ENCODE measurements at regions of chr6 and their contacts with region 1.

Region 1: DNA sequence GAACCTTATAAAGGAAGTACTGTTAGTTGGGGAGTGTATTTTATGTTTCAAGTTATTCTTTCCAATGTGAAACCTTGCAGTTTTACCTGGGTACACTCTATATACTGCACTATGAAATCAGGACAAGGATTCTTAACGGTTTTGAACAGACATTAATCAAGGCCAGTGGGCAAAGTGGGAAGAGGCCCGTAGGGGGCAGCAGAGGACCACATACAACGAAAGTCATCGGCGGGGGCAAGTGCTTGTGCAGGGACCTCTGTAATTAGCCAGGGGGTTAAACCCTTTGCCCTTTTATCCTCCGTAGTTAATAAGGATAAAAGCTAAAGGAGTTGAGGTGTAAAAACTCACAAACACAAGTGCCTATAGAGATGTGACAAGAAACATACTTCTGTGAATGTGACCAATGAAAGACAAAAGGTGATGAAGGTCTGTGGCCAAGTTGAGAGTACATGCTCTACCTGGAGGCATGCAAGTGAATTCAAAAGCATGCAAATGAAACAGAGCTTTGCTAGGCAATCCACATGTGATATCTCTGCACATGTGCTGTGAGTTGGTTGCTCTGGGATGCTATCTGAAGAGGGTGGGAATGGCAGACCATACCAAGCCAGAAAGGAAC is 392.7 kb upstream of the MAN1A1 start:
- DNase-seq: no peak
- ATAC-seq: peak; percentile 98
- H3K4me3 ChIP-seq: no peak overlapping the region
- H3K27ac ChIP-seq: no peak overlapping the region
- H3K4me1 ChIP-seq: no peaks in the 10 kb centered on the region
- H3K27me3 ChIP-seq: no peaks in the 10 kb centered on the region; a peak in 1 of 4 replicates
- CTCF ChIP-seq: peak; percentile 82 to 85 (median 84)
- EP300 ChIP-seq: no peak
- POLR2A ChIP-seq: no peak
- RAD21 ChIP-seq: peak; percentile 93

Region 2: GRCh38 chr6:119333707-119334295 is 408.5 kb before region 1 on chr6:
- CTCF ChIA-PET with region 1: interaction called, 3 read pairs
- POLR2A ChIA-PET with region 1: no interaction called
- RAD21 ChIA-PET with region 1: interaction called, 10 read pairs
- SMC1A ChIA-PET with region 1: interaction called, 8 read pairs
- in situ Hi-C with region 1: no loop called
- intact Hi-C with region 1: no loop called
- DNase-seq: no peak
- ATAC-seq: peak; percentile 61
- H3K4me3 ChIP-seq: no peak overlapping the region
- H3K27ac ChIP-seq: no peak overlapping the region
- H3K4me1 ChIP-seq: no peaks in the 10 kb centered on the region
- H3K27me3 ChIP-seq: no peaks in the 10 kb centered on the region
- CTCF ChIP-seq: peak; percentile 45 to 69 (median 57); a peak in 5 of 6 replicates
- EP300 ChIP-seq: no peak
- POLR2A ChIP-seq: no peak
- RAD21 ChIP-seq: peak; percentile 88

Region 3: DNA sequence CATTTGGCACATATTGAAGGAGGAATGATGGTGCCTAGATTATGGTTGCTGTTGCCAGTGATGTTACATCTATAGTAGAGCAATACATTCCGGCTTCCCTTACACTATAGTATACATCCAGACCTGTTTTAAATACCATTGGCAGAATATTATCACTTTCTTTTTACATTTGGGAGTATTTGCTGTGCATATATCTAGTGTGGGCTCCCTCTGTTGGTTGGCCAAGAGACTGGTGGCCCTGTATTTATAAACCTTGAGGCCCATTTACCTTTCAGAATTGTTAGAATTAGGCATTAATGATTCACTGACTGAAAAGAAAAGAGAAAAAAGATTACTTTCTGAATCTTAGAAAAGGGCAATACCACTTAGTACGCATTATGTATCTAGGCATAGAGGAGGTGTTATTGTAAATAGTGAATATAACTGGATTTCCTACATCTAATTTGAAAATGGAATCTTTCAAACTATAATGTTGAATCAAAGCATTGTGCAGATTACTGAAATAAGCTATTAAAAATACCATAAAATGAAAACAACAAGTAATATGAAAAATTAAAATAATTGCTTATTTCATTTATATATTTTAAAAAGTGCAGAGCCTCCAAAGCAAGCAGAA is 236.1 kb after region 1 on chr6:
- CTCF ChIA-PET with region 1: interaction called, 8 read pairs
- POLR2A ChIA-PET with region 1: no interaction called
- RAD21 ChIA-PET with region 1: no interaction called
- SMC1A ChIA-PET with region 1: interaction called, 6 read pairs
- in situ Hi-C with region 1: no loop called
- intact Hi-C with region 1: loop called (anchors 1 kb)
- DNase-seq: no peak
- ATAC-seq: peak; percentile 80
- H3K4me3 ChIP-seq: no peak overlapping the region
- H3K27ac ChIP-seq: no peak overlapping the region
- H3K4me1 ChIP-seq: no peaks in the 10 kb centered on the region
- H3K27me3 ChIP-seq: no peaks in the 10 kb centered on the region
- CTCF ChIP-seq: peak; percentile 43 to 48 (median 48); a peak in 5 of 6 replicates
- EP300 ChIP-seq: no peak
- POLR2A ChIP-seq: no peak
- RAD21 ChIP-seq: peak; percentile 57

Region 4: GRCh38 chr6:120147157-120147871 is 405.0 kb after region 1 on chr6:
- CTCF ChIA-PET with region 1: no interaction called
- POLR2A ChIA-PET with region 1: no interaction called
- RAD21 ChIA-PET with region 1: no interaction called
- SMC1A ChIA-PET with region 1: no interaction called
- in situ Hi-C with region 1: no loop called
- intact Hi-C with region 1: loop called (anchors 10 kb)
- DNase-seq: no peak
- ATAC-seq: peak; percentile 55
- H3K4me3 ChIP-seq: no peak overlapping the region
- H3K27ac ChIP-seq: no peak overlapping the region
- H3K4me1 ChIP-seq: no peaks in the 10 kb centered on the region
- H3K27me3 ChIP-seq: no peaks in the 10 kb centered on the region
- CTCF ChIP-seq: peak; percentile 19 to 34 (median 20); a peak in 4 of 6 replicates
- EP300 ChIP-seq: no peak
- POLR2A ChIP-seq: no peak
- RAD21 ChIP-seq: 0 out of 2 replicates have a peak, but pooled peaks have one; percentile 12

Region 5: GRCh38 chr6:120378582-120379220 is 636.4 kb after region 1 on chr6:
- CTCF ChIA-PET with region 1: no interaction called
- POLR2A ChIA-PET with region 1: no interaction called
- RAD21 ChIA-PET with region 1: no interaction called
- SMC1A ChIA-PET with region 1: no interaction called
- in situ Hi-C with region 1: no loop called
- intact Hi-C with region 1: loop called (anchors 2 kb)
- DNase-seq: no peak
- ATAC-seq: peak; percentile 83
- H3K4me3 ChIP-seq: no peak overlapping the region
- H3K27ac ChIP-seq: no peak overlapping the region
- H3K4me1 ChIP-seq: no peaks in the 10 kb centered on the region
- H3K27me3 ChIP-seq: no peaks in the 10 kb centered on the region
- CTCF ChIP-seq: peak; percentile 46 to 79 (median 59)
- EP300 ChIP-seq: no peak
- POLR2A ChIP-seq: no peak
- RAD21 ChIP-seq: peak; percentile 45

Region 6: GRCh38 chr6:120451508-120451907 is 709.2 kb after region 1 on chr6:
- CTCF ChIA-PET with region 1: no interaction called
- POLR2A ChIA-PET with region 1: no interaction called
- RAD21 ChIA-PET with region 1: no interaction called
- SMC1A ChIA-PET with region 1: no interaction called
- in situ Hi-C with region 1: no loop called
- intact Hi-C with region 1: no loop called
- DNase-seq: no peak
- ATAC-seq: no peak
- H3K4me3 ChIP-seq: no peak overlapping the region
- H3K27ac ChIP-seq: no peak overlapping the region
- H3K4me1 ChIP-seq: no peaks in the 10 kb centered on the region
- H3K27me3 ChIP-seq: no peaks in the 10 kb centered on the region
- CTCF ChIP-seq: no peak
- EP300 ChIP-seq: no peak
- POLR2A ChIP-seq: no peak
- RAD21 ChIP-seq: no peak